ENCODE measurements at regions of chr1 and their contacts with region 1.

Region 1: DNA sequence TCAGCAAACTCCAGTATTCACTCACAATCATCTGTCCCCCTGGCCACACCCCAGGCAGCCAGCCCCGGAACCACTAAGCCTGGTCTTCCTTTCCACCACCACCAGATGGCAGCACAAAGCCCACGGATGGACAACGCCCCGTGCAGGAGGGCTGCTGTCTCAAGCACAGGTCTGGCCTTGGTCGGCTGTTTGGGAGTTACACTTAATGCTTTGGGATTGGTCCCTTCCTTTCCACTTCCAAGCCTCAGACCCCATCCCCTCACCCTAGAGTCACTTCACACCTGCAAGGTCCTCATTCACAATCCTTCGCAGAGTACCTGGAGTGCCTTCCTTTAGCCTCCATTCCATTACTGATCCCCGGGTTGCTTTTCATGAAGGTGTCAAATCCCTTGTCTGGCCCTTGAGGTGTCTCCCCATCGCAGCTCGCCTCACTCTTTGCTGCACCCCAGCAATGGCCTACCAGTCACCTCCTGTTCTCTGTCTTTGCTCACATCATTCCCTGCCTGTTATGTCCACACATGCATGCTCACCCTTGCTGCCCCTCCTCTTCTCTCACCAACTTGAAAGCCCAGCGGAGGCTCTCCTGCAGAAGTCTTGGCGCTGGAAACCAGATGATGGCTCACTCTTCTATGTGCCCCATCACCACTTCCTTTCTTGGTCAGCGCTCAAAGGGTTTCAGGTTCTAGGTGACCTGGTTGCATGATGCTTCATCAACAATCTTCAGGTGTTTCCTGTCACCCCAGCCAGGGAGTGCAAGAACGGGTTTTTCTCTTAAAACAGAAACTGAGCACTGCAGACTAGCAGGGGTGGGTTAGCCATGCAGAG is 24.9 kb upstream of the KCNA2 start:
- DNase-seq: peak; percentile 74 to 88 (median 77)
- ATAC-seq: peak; percentile 14 to 68 (median 51)
- H3K4me3 ChIP-seq: no peak overlapping the region
- H3K27ac ChIP-seq: peak overlapping the region in 1 of 12 donors; percentile 66
- H3K4me1 ChIP-seq: peaks cover 0 to 68% (median 12%) of the 10 kb centered on the region in 12 donors
- H3K27me3 ChIP-seq: peaks cover 0 to 8% (median 0%) of the 10 kb centered on the region in 9 donors
- CTCF ChIP-seq: peak; percentile 80 to 91 (median 84)
- POLR2A ChIP-seq: no peak

Region 2: GRCh38 chr1:110502402-110503151 is 128.5 kb before region 1 on chr1:
- intact Hi-C with region 1: no loop called
- DNase-seq: no peak
- ATAC-seq: peak in 3 of 4 donors; percentile 24 to 46 (median 34)
- H3K4me3 ChIP-seq: no peak overlapping the region
- H3K27ac ChIP-seq: no peak overlapping the region
- H3K4me1 ChIP-seq: peaks cover 0 to 4% (median 0%) of the 10 kb centered on the region in 12 donors
- H3K27me3 ChIP-seq: peaks cover 0 to 6% (median 0%) of the 10 kb centered on the region in 9 donors
- CTCF ChIP-seq: no peak
- POLR2A ChIP-seq: no peak

Region 3: DNA sequence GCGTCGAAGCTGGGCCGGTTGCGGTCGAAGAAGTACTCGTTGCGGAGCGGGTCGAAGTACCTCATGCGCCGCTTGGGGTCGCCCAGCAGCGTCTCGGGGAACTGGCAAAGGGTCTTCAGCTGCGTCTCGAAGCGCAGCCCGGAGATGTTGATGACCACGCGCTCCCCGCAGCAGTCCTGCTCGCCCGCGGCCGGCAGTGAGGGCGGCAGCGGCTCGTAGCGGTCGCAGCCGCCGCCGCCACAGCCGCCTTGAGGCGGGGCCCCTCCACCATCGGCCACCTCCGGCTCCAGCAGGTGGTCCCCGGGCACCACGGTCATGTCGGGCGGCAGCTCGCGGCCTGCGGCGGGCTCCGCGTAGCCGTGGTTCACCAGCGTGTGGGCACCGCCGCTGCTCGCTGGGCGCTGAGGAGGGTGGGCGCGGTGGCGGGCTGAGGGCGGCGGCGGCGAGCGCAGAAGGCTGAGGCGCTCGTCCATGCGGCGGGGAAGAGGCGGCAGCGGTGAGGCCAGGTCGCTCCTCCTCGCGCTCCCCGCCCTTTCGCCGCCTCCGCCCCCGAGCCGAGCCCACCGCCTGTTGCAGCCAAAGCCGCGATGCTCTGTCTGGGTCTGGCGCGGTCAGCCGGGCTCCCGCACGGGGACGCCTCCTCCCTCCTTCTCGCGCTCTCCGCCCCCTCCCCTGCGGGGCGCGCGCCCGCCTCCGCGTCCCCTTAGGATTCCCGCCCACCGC is 43.4 kb after region 1 on chr1 and contains the start of gene KCNA3:
- intact Hi-C with region 1: loop called in 2 of 10 experiments (anchors 5 kb)
- DNase-seq: peak; percentile 27 to 77 (median 42)
- ATAC-seq: peak in 3 of 4 donors; percentile 30 to 71 (median 66)
- H3K4me3 ChIP-seq: peak within 1 kb of the TSS; percentile 45 to 73 (median 61)
- H3K27ac ChIP-seq: peak within 1 kb of the TSS in 5 of 12 donors; percentile 20 to 80 (median 35)
- H3K4me1 ChIP-seq: peaks cover 0 to 35% (median 8%) of the 10 kb centered on the region in 12 donors
- H3K27me3 ChIP-seq: peaks cover 23 to 60% (median 43%) of the 10 kb centered on the region in 9 donors
- CTCF ChIP-seq: peak in 3 of 12 donors; percentile 1 to 18 (median 10)
- POLR2A ChIP-seq: no peak
- total RNA-seq, gene KCNA3: 0.14 to 2.3 (median 0.54) TPM

Region 4: DNA sequence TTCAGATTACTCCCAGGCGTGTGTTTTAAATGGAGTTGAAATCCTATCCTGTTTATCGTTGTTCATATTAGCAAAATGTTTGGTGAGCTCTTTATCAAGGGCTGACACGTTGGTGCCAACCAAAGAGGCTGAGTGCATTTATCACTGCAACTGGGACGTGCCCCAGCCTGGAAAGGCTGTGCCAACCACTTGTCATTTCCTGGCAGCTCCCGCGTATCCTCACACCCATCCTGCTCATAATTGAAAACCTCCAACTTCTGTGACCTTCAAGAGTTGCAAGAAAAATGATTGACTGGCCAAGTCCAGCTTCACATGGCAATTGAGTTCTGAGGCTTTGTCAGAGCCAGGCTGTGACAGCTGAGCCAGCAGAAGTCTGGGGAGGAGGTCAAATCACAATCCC is 87.4 kb after region 1 on chr1:
- intact Hi-C with region 1: loop called in 1 of 10 experiments (anchors 1 kb)
- DNase-seq: peak in 4 of 5 donors; percentile 37 to 79 (median 66)
- ATAC-seq: peak; percentile 89 to 99 (median 96)
- H3K4me3 ChIP-seq: no peak overlapping the region
- H3K27ac ChIP-seq: peak overlapping the region in 1 of 12 donors; percentile 20
- H3K4me1 ChIP-seq: peaks cover 0 to 7% (median 0%) of the 10 kb centered on the region in 12 donors
- H3K27me3 ChIP-seq: peaks cover 0 to 10% (median 0%) of the 10 kb centered on the region in 9 donors
- CTCF ChIP-seq: no peak
- POLR2A ChIP-seq: no peak

Region 5: DNA sequence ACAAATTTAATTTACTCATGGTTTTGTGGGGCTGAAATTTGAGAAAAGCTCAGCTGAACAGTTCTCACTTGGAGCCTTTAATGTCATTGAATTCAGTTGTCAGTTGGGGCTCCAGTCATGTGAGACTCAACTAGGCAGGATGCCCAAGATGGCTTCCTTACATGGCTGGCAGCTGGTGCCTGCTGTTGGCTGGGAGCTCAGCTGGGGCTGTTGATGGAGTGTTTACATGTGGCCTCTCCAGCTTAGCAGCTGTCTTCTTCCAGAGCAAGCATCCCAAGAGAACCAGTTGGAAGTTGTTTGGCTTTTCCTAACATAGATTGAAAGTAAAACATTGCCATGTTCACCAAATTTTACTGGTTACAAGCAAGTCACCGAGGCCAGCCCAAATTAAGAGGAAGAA is 125.5 kb after region 1 on chr1:
- intact Hi-C with region 1: loop called in 1 of 10 experiments (anchors 2 kb)
- DNase-seq: peak; percentile 36 to 83 (median 59)
- ATAC-seq: peak; percentile 67 to 92 (median 82)
- H3K4me3 ChIP-seq: no peak overlapping the region
- H3K27ac ChIP-seq: no peak overlapping the region
- H3K4me1 ChIP-seq: peaks cover 0 to 3% (median 0%) of the 10 kb centered on the region in 12 donors
- H3K27me3 ChIP-seq: peaks cover 0 to 36% (median 6%) of the 10 kb centered on the region in 9 donors
- CTCF ChIP-seq: no peak
- POLR2A ChIP-seq: no peak

Region 6: DNA sequence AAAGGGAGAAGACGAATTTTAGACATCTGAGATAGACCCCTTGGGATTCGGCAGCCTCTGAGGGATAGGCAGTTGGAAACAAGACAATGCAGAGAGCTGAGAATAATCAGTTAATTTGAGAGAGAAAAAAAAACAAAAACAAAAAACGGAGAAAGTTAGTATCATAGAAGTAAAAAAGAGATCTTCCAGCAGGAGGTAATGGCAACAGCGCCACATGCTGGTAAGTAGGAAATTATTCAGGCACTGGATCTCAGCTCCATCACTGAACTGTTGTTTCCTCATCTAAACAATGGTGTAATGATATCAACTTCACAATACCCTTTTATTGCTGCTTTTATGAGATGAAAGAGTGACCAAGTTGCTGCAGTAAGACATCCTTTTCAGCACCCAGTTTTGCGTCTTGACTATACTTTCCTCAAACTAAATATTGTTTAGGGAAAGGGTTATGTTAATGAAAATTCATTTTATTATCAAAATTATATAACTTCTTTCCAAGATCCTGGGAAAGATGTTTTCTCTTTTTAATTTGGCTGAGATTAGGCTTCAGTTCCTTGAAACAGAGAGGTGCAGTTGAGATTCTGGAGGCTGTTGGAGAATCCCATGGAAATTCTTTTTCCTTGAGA is 135.1 kb after region 1 on chr1:
- intact Hi-C with region 1: loop called (anchors 1 to 2 kb)
- DNase-seq: peak in 3 of 5 donors; percentile 27 to 42 (median 32)
- ATAC-seq: peak in 2 of 4 donors; percentile 53 to 65
- H3K4me3 ChIP-seq: no peak overlapping the region
- H3K27ac ChIP-seq: no peak overlapping the region
- H3K4me1 ChIP-seq: peaks cover 0 to 4% (median 0%) of the 10 kb centered on the region in 12 donors
- H3K27me3 ChIP-seq: peaks cover 0 to 24% (median 2%) of the 10 kb centered on the region in 9 donors
- CTCF ChIP-seq: peak; percentile 68 to 91 (median 84)
- POLR2A ChIP-seq: no peak

Region 7: GRCh38 chr1:110780600-110781484 is 149.8 kb after region 1 on chr1:
- intact Hi-C with region 1: loop called (anchors 1 to 5 kb)
- DNase-seq: peak in 4 of 5 donors; percentile 46 to 62 (median 55)
- ATAC-seq: peak in 3 of 4 donors; percentile 47 to 72 (median 69)
- H3K4me3 ChIP-seq: no peak overlapping the region
- H3K27ac ChIP-seq: no peak overlapping the region
- H3K4me1 ChIP-seq: peaks cover 0 to 17% (median 0%) of the 10 kb centered on the region in 12 donors
- H3K27me3 ChIP-seq: peaks cover 0 to 31% (median 3%) of the 10 kb centered on the region in 9 donors
- CTCF ChIP-seq: peak; percentile 73 to 90 (median 80)
- POLR2A ChIP-seq: no peak

Measured in heart left ventricle (tissue), 16 donors.